T-cell (primary cell): ENCODE measurements at regions of chr17 and their contacts with region 1.

Region 1: GRCh38 chr17:17108451-17109049 is 66.3 kb downstream of the MPRIP start:
- DNase-seq: no peak
- ATAC-seq: no peak
- H3K4me3 ChIP-seq: no peak overlapping the region
- H3K4me3 Mint-ChIP-seq: no peak overlapping the region
- H3K27ac ChIP-seq: peak overlapping the region; percentile 68
- H3K27ac Mint-ChIP-seq: peak overlapping the region; percentile 88 to 91
- H3K4me1 ChIP-seq: peaks cover 10 to 62% of the 10 kb centered on the region in 2 experiments
- H3K4me1 Mint-ChIP-seq: peaks cover 72 to 85% (median 73%) of the 10 kb centered on the region in 3 donors
- H3K27me3 ChIP-seq: no peaks in the 10 kb centered on the region
- H3K27me3 Mint-ChIP-seq: no peaks in the 10 kb centered on the region

Region 2: GRCh38 chr17:16991349-16992009 is 117.1 kb before region 1 on chr17:
- CTCF ChIA-PET with region 1: interaction called in 1 of 2 experiments, 11 read pairs
- POLR2A ChIA-PET with region 1: no interaction called
- DNase-seq: peak; percentile 49 to 88 (median 75)
- ATAC-seq: peak; percentile 49 to 75 (median 55)
- H3K4me3 ChIP-seq: no peak overlapping the region
- H3K4me3 Mint-ChIP-seq: peak overlapping the region in 1 of 3 donors; percentile 44
- H3K27ac ChIP-seq: no peak overlapping the region
- H3K27ac Mint-ChIP-seq: no peak overlapping the region
- H3K4me1 ChIP-seq: peaks cover 34 to 54% of the 10 kb centered on the region in 2 experiments
- H3K4me1 Mint-ChIP-seq: peaks cover 29 to 43% (median 33%) of the 10 kb centered on the region in 3 donors
- H3K27me3 ChIP-seq: no peaks in the 10 kb centered on the region
- H3K27me3 Mint-ChIP-seq: no peaks in the 10 kb centered on the region

Region 3: GRCh38 chr17:17264430-17264829 is 155.9 kb after region 1 on chr17:
- CTCF ChIA-PET with region 1: interaction called in 1 of 2 experiments, 10 read pairs
- POLR2A ChIA-PET with region 1: interaction called in 1 of 2 experiments, 3 read pairs
- DNase-seq: no peak
- ATAC-seq: no peak
- H3K4me3 ChIP-seq: no peak overlapping the region
- H3K4me3 Mint-ChIP-seq: no peak overlapping the region
- H3K27ac ChIP-seq: no peak overlapping the region
- H3K27ac Mint-ChIP-seq: no peak overlapping the region
- H3K4me1 ChIP-seq: no peaks in the 10 kb centered on the region
- H3K4me1 Mint-ChIP-seq: no peaks in the 10 kb centered on the region
- H3K27me3 ChIP-seq: no peaks in the 10 kb centered on the region
- H3K27me3 Mint-ChIP-seq: no peaks in the 10 kb centered on the region